Common myeloid progenitor, CD34-positive (primary cell): ENCODE measurements at regions of chr6 and their contacts with region 1.

Region 1: GRCh38 chr6:109382576-109383437 is 540 bp upstream of the CD164 start:
- DNase-seq: peak; percentile 97 to 98 (median 97)
- H3K4me3 ChIP-seq: peak overlapping the region; percentile 71 to 100 (median 96)
- H3K27ac ChIP-seq: peak overlapping the region; percentile 99 to 100
- H3K4me1 ChIP-seq: peaks cover 39 to 58% (median 42%) of the 10 kb centered on the region in 4 experiments
- H3K27me3 ChIP-seq: no peaks in the 10 kb centered on the region

Region 2: GRCh38 chr6:109095027-109095834 is 287.6 kb before region 1 on chr6 and contains the start of gene CEP57L1:
- CTCF ChIA-PET with region 1: interaction called, 10 read pairs
- POLR2A ChIA-PET with region 1: interaction called, 7 read pairs
- DNase-seq: peak; percentile 98 to 99 (median 99)
- H3K4me3 ChIP-seq: peak within 1 kb of the TSS; percentile 88 to 100 (median 98)
- H3K27ac ChIP-seq: peak within 1 kb of the TSS; percentile 86 to 95
- H3K4me1 ChIP-seq: peaks cover 12 to 35% (median 24%) of the 10 kb centered on the region in 4 experiments
- H3K27me3 ChIP-seq: no peaks in the 10 kb centered on the region

Region 3: GRCh38 chr6:109165392-109165974 is 217.3 kb before region 1 on chr6:
- CTCF ChIA-PET with region 1: no interaction called
- POLR2A ChIA-PET with region 1: no interaction called
- DNase-seq: peak in 2 of 3 donors; percentile 28 to 50
- H3K4me3 ChIP-seq: no peak overlapping the region
- H3K27ac ChIP-seq: no peak overlapping the region
- H3K4me1 ChIP-seq: peaks cover 0 to 3% (median 0%) of the 10 kb centered on the region in 4 experiments
- H3K27me3 ChIP-seq: no peaks in the 10 kb centered on the region

Region 4: GRCh38 chr6:109296452-109296851 is 86.4 kb before region 1 on chr6:
- CTCF ChIA-PET with region 1: interaction called, 10 read pairs
- POLR2A ChIA-PET with region 1: interaction called, 12 read pairs
- DNase-seq: peak in 1 of 3 donors; percentile 36
- H3K4me3 ChIP-seq: no peak overlapping the region
- H3K27ac ChIP-seq: no peak overlapping the region
- H3K4me1 ChIP-seq: peaks cover 35 to 92% (median 77%) of the 10 kb centered on the region in 4 experiments
- H3K27me3 ChIP-seq: no peaks in the 10 kb centered on the region

Region 5: DNA sequence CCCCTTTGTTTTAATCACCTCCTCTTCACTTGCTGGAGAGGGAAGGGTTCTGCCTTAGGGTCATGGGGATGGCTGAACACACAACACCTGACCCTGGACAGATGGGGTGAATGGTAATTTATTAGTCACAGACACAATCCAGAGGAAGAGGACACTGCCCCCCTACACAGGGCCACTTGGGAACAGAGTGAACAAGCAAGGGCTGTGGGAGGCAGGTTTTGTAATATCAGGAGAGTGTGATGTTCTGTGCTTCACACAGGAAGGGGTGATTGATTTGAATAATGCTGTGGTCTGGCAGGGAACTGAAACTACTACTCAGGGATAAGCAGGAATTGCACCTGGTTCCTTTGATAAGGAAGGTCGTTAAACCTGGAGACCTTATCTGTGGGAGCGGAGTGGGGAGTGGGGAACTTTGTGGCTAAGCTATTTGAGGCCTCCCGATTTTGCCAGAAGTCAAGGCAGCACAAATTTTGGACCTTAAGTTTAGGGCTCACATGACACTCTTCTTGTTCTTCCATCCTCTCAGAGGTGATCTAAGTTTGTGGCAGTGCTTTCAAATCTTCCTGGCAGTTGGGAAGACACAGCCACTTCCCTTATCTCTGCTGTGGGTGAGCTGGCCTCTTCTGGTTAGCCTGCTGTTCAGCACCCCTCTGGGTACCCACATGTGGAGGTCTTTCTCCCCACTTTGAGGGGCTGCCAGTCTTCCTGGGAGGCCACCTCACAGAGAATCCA is 78.4 kb before region 1 on chr6:
- CTCF ChIA-PET with region 1: interaction called, 14 read pairs
- POLR2A ChIA-PET with region 1: interaction called, 16 read pairs
- DNase-seq: peak; percentile 80 to 95 (median 90)
- H3K4me3 ChIP-seq: peak overlapping the region in 5 of 7 experiments; percentile 2 to 56 (median 47)
- H3K27ac ChIP-seq: peak overlapping the region; percentile 78 to 88
- H3K4me1 ChIP-seq: peaks cover 27 to 85% (median 76%) of the 10 kb centered on the region in 4 experiments
- H3K27me3 ChIP-seq: no peaks in the 10 kb centered on the region

Region 6: GRCh38 chr6:109397020-109397419 is 14.2 kb after region 1 on chr6:
- CTCF ChIA-PET with region 1: interaction called, 57 read pairs
- POLR2A ChIA-PET with region 1: interaction called, 5 read pairs
- DNase-seq: peak; percentile 63 to 75 (median 65)
- H3K4me3 ChIP-seq: peak overlapping the region in 1 of 7 experiments; percentile 53
- H3K27ac ChIP-seq: no peak overlapping the region
- H3K4me1 ChIP-seq: peaks cover 0 to 28% (median 15%) of the 10 kb centered on the region in 4 experiments
- H3K27me3 ChIP-seq: no peaks in the 10 kb centered on the region

Region 7: GRCh38 chr6:109440331-109441068 is 57.7 kb after region 1 on chr6 and contains the starts of genes PPIL6 and SMPD2:
- CTCF ChIA-PET with region 1: interaction called, 40 read pairs
- POLR2A ChIA-PET with region 1: interaction called, 8 read pairs
- DNase-seq: peak; percentile 88 to 94 (median 94)
- H3K4me3 ChIP-seq: peak within 1 kb of the TSS; percentile 60 to 91 (median 86)
- H3K27ac ChIP-seq: peak within 1 kb of the TSS; percentile 83 to 92
- H3K4me1 ChIP-seq: peaks cover 4 to 24% (median 21%) of the 10 kb centered on the region in 4 experiments
- H3K27me3 ChIP-seq: no peaks in the 10 kb centered on the region